PC-9 (cell line): ENCODE measurements at regions of chrX and their contacts with region 1.

Region 1: GRCh38 chrX:154097597-154098541 is at the start of gene MECP2:
- DNase-seq: peak; percentile 82 to 97
- H3K4me3 ChIP-seq: peak within 1 kb of the TSS; percentile 79
- H3K27ac ChIP-seq: no peak within 1 kb of the TSS
- H3K4me1 ChIP-seq: 0 out of 2 replicates have a peak, but pooled peaks cover 14% of the 10 kb centered on the region
- H3K27me3 ChIP-seq: no peaks in the 10 kb centered on the region
- CTCF ChIP-seq: no peak
- total RNA-seq, gene MECP2: 85.6 and 90.1 TPM in 2 replicates

Region 2: GRCh38 chrX:153971450-153972367 is 126.2 kb before region 1 on chrX and contains the start of gene HCFC1:
- CTCF ChIA-PET with region 1: interaction called, 4 read pairs
- POLR2A ChIA-PET with region 1: no interaction called
- intact Hi-C with region 1: loop called (anchors 1 kb)
- DNase-seq: peak; percentile 75 to 90
- H3K4me3 ChIP-seq: peak within 1 kb of the TSS; percentile 92
- H3K27ac ChIP-seq: peak within 1 kb of the TSS; percentile 99
- H3K4me1 ChIP-seq: peaks cover 13% of the 10 kb centered on the region
- H3K27me3 ChIP-seq: no peaks in the 10 kb centered on the region
- CTCF ChIP-seq: no peak
- total RNA-seq, gene HCFC1: 67.1 and 79.9 TPM in 2 replicates

Region 3: DNA sequence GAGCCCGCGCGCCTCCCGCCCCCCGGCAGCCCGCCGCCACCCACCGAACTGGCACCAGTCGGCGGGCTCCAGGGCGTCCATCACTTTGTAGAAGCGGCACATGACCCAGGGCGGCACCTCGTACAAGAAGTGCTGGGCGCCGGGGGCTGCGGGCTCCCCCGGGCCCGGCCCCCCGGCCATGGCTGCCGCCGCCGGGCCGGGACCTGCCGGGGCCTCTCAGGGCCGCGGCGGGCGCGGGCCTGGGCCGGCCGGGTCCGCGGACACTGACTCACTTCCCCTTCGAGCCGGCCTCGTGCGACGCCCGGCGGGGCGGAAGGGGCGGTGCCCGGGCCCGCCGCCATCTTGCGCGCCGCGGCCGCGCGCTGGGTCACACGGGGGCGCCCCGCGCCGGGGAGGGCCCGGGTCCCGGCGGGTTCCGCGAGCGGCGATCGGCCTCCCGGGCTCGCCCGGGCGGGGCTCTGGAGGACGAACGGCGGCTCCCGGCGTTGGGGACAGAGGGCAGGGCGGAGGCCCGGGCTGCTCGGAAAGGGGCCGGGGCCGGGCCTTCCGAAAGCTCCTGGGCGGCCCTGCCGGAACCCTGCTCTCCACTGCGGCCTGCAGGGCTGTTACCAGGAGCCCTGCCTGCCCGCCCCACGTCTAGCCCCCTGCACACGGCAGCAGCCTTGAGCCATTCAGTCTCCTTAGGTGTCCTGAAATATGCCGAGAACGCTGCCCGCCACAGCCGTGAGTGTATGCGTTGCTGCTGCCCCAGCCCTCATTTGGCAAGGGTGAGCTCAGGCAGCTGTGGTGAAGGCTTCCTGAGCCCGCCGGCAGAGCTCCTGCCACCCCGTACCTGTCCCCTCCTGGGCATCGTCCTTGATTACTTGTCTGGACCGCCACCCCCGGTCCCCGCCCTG is 78.0 kb before region 1 on chrX and contains the start of gene IRAK1:
- CTCF ChIA-PET with region 1: no interaction called
- POLR2A ChIA-PET with region 1: no interaction called
- intact Hi-C with region 1: loop called (anchors 2 kb)
- DNase-seq: peak; percentile 42 to 75
- H3K4me3 ChIP-seq: peak within 1 kb of the TSS; percentile 78
- H3K27ac ChIP-seq: peak within 1 kb of the TSS; percentile 73
- H3K4me1 ChIP-seq: peaks cover 8% of the 10 kb centered on the region; the same call in 1 of the 2 replicates
- H3K27me3 ChIP-seq: no peaks in the 10 kb centered on the region
- CTCF ChIP-seq: no peak
- total RNA-seq, gene IRAK1: 317 and 364 TPM in 2 replicates

Region 4: GRCh38 chrX:154074199-154074598 is 23.7 kb before region 1 on chrX:
- CTCF ChIA-PET with region 1: no interaction called
- POLR2A ChIA-PET with region 1: interaction called, 12 read pairs
- intact Hi-C with region 1: no loop called
- DNase-seq: peak; percentile 63 to 77
- H3K4me3 ChIP-seq: no peak overlapping the region
- H3K27ac ChIP-seq: peak overlapping the region; percentile 53
- H3K4me1 ChIP-seq: peaks cover 20% of the 10 kb centered on the region
- H3K27me3 ChIP-seq: no peaks in the 10 kb centered on the region
- CTCF ChIP-seq: no peak

Region 5: DNA sequence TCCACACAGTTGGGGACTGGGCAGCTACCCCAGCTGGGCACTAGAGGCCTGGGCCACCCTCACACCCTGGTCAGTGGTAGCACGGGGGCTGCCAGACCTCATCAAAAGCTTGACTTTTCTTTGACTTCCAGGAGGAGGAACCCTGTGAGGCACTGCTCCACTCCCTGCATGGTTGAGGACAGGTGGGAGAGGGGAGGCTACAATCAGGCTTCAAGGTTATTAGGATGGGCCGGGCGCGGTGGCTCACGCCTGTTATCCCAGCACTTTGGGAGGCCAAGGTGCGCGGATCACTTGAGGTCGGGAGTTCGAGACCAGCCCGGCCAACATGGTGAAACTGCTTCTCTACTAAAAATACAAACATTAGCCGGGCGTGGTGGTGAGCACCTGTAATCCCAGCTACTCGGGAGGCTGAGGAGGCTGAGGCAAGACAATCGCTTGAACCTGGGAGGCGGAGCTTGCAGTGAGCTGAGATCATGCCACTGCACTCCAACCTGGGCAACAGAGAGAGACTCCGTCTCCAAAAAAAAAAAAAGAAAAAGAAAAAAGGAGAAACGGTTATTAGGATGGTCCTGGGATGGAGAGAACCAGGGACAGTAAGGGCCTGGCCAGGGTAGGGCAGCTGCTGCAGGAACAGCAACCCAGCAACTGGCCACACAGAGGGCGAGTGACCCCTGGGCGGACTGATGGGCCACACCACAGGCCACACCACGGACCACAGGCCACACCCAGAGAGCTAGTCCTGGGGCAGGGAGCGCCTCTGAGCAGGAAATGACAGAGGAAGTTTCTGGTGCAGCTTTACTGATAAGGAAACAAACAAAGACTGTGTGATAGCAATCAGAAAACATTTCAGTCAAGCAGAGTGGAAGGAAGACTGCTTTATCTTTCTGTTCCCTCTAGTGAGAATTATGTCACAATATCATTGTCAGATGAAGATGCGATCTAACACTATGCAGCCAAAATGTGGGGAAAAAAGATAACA is 25.7 kb after region 1 on chrX:
- CTCF ChIA-PET with region 1: no interaction called
- POLR2A ChIA-PET with region 1: no interaction called
- intact Hi-C with region 1: loop called (anchors 2 kb)
- DNase-seq: peak; percentile 71 to 80
- H3K4me3 ChIP-seq: no peak overlapping the region
- H3K27ac ChIP-seq: peak overlapping the region; percentile 87
- H3K4me1 ChIP-seq: peaks cover 42% of the 10 kb centered on the region
- H3K27me3 ChIP-seq: no peaks in the 10 kb centered on the region
- CTCF ChIP-seq: no peak